AG04449 (cell line): ENCODE measurements at regions of chr6 and their contacts with region 1.

Region 1: GRCh38 chr6:75208298-75209183 is 2.7 kb upstream of the COL12A1 start:
- DNase-seq: no peak
- H3K4me3 ChIP-seq: peak overlapping the region; percentile 6
- CTCF ChIP-seq: peak; percentile 79

Region 2: DNA sequence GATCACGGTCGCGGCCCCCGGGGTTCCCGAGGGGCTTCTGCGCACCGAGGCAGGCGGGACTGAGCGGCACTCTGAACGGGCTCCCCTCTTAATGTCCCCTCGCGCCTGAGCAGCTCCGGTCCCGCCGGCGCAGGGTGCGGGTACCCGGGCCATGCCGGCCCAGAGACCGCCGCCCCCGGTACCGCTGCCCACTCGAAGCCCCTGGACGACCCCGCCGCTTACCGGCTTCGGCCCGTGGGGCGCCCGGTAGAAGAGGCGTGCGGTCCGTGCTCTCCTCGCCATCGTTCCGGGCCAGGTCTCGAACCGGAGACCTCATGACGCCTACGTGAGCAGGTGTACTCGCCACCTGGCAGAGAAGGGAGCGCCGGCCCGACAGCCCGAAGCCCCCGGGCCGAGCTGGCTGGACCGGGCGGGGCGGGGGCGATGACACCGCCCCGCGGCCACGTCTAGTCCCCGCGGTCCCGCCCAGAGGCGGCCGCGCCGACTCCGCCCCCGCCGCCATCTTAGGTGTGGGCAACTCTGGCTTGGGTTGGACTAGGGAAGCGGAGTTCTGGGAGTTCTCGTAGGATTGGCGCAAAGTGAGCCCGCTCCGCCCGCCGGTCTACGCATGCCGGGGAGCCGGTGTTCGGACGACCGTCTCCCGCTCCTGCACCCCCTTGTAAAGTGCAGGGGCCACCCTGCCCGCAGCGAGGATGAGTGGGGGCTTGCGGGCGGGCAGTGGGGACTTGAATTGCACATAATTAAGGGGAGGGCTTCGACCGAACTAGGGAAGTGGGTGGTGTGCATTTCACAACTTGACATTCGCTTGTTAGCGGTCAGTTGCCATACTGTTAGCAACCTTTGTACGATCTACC is 1554.7 kb before region 1 on chr6 and contains the start of gene SLC17A5:
- CTCF ChIA-PET with region 1: interaction called, 16 read pairs
- POLR2A ChIA-PET with region 1: no interaction called
- DNase-seq: peak; percentile 49
- H3K4me3 ChIP-seq: peak within 1 kb of the TSS; percentile 96
- CTCF ChIP-seq: no peak

Region 3: GRCh38 chr6:73747289-73747688 is 1461.3 kb before region 1 on chr6:
- CTCF ChIA-PET with region 1: interaction called, 210 read pairs
- POLR2A ChIA-PET with region 1: no interaction called
- DNase-seq: no peak
- H3K4me3 ChIP-seq: no peak overlapping the region
- CTCF ChIP-seq: no peak

Region 4: DNA sequence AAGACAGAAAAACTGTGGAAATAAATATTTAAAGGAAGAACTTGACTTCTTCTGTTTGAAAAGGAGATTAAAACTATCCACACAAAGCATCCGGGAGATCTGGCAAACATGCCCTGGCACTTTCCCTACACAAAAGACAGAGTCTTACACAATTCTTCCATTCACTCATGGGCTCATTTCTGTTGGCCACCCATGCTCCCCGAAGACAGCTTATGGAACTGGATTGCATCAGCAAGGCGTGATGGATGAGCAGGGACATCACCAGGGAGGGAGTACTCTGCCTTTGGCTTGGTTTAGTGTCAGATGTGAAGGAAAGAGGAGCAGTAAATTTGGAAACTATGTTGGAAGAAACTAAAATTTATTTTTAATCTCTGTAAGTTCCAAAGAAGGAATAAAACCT is 1133.2 kb before region 1 on chr6:
- CTCF ChIA-PET with region 1: interaction called, 10 read pairs
- POLR2A ChIA-PET with region 1: interaction called, 3 read pairs
- DNase-seq: no peak
- H3K4me3 ChIP-seq: no peak overlapping the region
- CTCF ChIP-seq: no peak

Region 5: DNA sequence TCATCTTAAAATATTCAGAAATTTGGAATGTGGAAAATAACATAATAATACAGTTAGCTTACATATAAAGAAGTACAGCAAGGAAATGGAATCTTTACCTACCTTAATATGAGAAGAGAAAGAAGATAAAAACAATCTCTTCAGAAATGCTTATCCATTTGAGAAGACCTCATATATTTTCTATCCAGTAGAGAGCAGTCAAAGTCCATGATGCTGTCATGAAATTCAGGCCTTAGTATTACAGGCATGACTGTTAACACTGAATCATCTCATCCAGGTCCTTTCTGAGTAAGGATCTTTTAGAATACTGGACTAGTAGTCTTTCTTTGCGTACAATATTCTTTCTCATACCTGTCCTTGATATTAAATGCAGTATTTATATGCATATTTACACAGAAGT is 799.1 kb before region 1 on chr6:
- CTCF ChIA-PET with region 1: interaction called, 220 read pairs
- POLR2A ChIA-PET with region 1: interaction called, 5 read pairs
- DNase-seq: peak; percentile 42
- H3K4me3 ChIP-seq: no peak overlapping the region
- CTCF ChIP-seq: peak; percentile 37

Region 6: DNA sequence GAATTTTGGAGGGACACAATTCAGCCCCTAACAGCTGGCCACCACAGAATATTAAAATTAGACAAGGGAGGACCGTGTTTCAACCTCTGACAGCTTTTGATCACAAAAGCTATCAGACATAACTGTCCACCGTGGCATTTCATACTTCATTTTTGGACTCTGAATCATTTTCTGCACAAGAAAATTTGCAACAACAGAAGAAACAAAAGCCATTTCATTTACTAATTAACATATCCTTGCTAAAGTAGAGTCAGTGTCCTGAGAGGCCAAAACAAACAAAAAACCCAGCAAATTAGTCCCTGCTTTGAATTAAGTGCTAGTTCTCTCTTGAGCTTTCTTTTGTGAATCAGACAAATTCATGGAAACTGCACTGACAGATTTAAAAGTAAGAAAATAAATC is 14.9 kb after region 1 on chr6:
- CTCF ChIA-PET with region 1: interaction called, 80 read pairs
- POLR2A ChIA-PET with region 1: interaction called, 3 read pairs
- DNase-seq: no peak
- H3K4me3 ChIP-seq: no peak overlapping the region
- CTCF ChIP-seq: no peak